ENCODE measurements at regions of chr20 and their contacts with region 1.

Region 1: GRCh38 chr20:23340524-23340923 is 10.1 kb upstream of the NXT1 start:
- DNase-seq: peak; percentile 84 to 86
- H3K4me3 ChIP-seq: no peak overlapping the region
- H3K4me3 Mint-ChIP-seq: no peak overlapping the region
- H3K27ac Mint-ChIP-seq: no peak overlapping the region
- H3K4me1 ChIP-seq: peaks cover 8% of the 10 kb centered on the region; the same call in 1 of the 2 replicates
- H3K4me1 Mint-ChIP-seq: peaks cover 12% of the 10 kb centered on the region
- H3K27me3 ChIP-seq: no peaks in the 10 kb centered on the region
- H3K27me3 Mint-ChIP-seq: no peaks in the 10 kb centered on the region
- CTCF ChIP-seq: peak; percentile 82 to 87

Region 2: GRCh38 chr20:22339091-22339881 is 1001.2 kb before region 1 on chr20:
- CTCF ChIA-PET with region 1: interaction called, 4 read pairs
- POLR2A ChIA-PET with region 1: no interaction called
- intact Hi-C with region 1: loop called (anchors 1 kb)
- DNase-seq: peak; percentile 67 to 82
- H3K4me3 ChIP-seq: no peak overlapping the region
- H3K4me3 Mint-ChIP-seq: peak overlapping the region; percentile 46
- H3K27ac Mint-ChIP-seq: peak overlapping the region; percentile 32
- H3K4me1 ChIP-seq: no peaks in the 10 kb centered on the region
- H3K4me1 Mint-ChIP-seq: peaks cover 12% of the 10 kb centered on the region
- H3K27me3 ChIP-seq: no peaks in the 10 kb centered on the region
- H3K27me3 Mint-ChIP-seq: no peaks in the 10 kb centered on the region
- CTCF ChIP-seq: peak; percentile 80 to 83

Region 3: GRCh38 chr20:22805219-22805618 is 535.3 kb before region 1 on chr20:
- CTCF ChIA-PET with region 1: interaction called, 4 read pairs
- POLR2A ChIA-PET with region 1: no interaction called
- intact Hi-C with region 1: loop called (anchors 1 kb)
- DNase-seq: peak in 1 of 2 experiments; percentile 29
- H3K4me3 ChIP-seq: no peak overlapping the region
- H3K4me3 Mint-ChIP-seq: no peak overlapping the region
- H3K27ac Mint-ChIP-seq: no peak overlapping the region
- H3K4me1 ChIP-seq: peaks cover 38% of the 10 kb centered on the region
- H3K4me1 Mint-ChIP-seq: peaks cover 36% of the 10 kb centered on the region
- H3K27me3 ChIP-seq: no peaks in the 10 kb centered on the region
- H3K27me3 Mint-ChIP-seq: no peaks in the 10 kb centered on the region
- CTCF ChIP-seq: no peak

Region 4: GRCh38 chr20:22962557-22963438 is 377.7 kb before region 1 on chr20:
- CTCF ChIA-PET with region 1: interaction called, 5 read pairs
- POLR2A ChIA-PET with region 1: no interaction called
- intact Hi-C with region 1: loop called (anchors 2 kb)
- DNase-seq: peak in 1 of 2 experiments; percentile 42
- H3K4me3 ChIP-seq: no peak overlapping the region
- H3K4me3 Mint-ChIP-seq: peak overlapping the region; percentile 20
- H3K27ac Mint-ChIP-seq: peak overlapping the region; percentile 82
- H3K4me1 ChIP-seq: peaks cover 33% of the 10 kb centered on the region
- H3K4me1 Mint-ChIP-seq: peaks cover 17% of the 10 kb centered on the region
- H3K27me3 ChIP-seq: no peaks in the 10 kb centered on the region
- H3K27me3 Mint-ChIP-seq: no peaks in the 10 kb centered on the region
- CTCF ChIP-seq: peak in 1 of 2 experiments; percentile 6

Region 5: GRCh38 chr20:23021951-23022350 is 318.6 kb before region 1 on chr20:
- CTCF ChIA-PET with region 1: interaction called, 5 read pairs
- POLR2A ChIA-PET with region 1: no interaction called
- intact Hi-C with region 1: loop called (anchors 1 kb)
- DNase-seq: no peak
- H3K4me3 ChIP-seq: no peak overlapping the region
- H3K4me3 Mint-ChIP-seq: no peak overlapping the region
- H3K27ac Mint-ChIP-seq: peak overlapping the region; percentile 84
- H3K4me1 ChIP-seq: peaks cover 73% of the 10 kb centered on the region
- H3K4me1 Mint-ChIP-seq: peaks cover 54% of the 10 kb centered on the region
- H3K27me3 ChIP-seq: no peaks in the 10 kb centered on the region
- H3K27me3 Mint-ChIP-seq: no peaks in the 10 kb centered on the region
- CTCF ChIP-seq: no peak

Region 6: GRCh38 chr20:23050847-23051631 is 289.5 kb before region 1 on chr20:
- CTCF ChIA-PET with region 1: interaction called, 13 read pairs
- POLR2A ChIA-PET with region 1: interaction called, 3 read pairs
- intact Hi-C with region 1: loop called (anchors 1 kb)
- DNase-seq: peak; percentile 78 to 82
- H3K4me3 ChIP-seq: peak overlapping the region; percentile 45
- H3K4me3 Mint-ChIP-seq: peak overlapping the region; percentile 85
- H3K27ac Mint-ChIP-seq: peak overlapping the region; percentile 97
- H3K4me1 ChIP-seq: peaks cover 30% of the 10 kb centered on the region
- H3K4me1 Mint-ChIP-seq: peaks cover 32% of the 10 kb centered on the region
- H3K27me3 ChIP-seq: no peaks in the 10 kb centered on the region
- H3K27me3 Mint-ChIP-seq: no peaks in the 10 kb centered on the region
- CTCF ChIP-seq: peak; percentile 46 to 65

Region 7: DNA sequence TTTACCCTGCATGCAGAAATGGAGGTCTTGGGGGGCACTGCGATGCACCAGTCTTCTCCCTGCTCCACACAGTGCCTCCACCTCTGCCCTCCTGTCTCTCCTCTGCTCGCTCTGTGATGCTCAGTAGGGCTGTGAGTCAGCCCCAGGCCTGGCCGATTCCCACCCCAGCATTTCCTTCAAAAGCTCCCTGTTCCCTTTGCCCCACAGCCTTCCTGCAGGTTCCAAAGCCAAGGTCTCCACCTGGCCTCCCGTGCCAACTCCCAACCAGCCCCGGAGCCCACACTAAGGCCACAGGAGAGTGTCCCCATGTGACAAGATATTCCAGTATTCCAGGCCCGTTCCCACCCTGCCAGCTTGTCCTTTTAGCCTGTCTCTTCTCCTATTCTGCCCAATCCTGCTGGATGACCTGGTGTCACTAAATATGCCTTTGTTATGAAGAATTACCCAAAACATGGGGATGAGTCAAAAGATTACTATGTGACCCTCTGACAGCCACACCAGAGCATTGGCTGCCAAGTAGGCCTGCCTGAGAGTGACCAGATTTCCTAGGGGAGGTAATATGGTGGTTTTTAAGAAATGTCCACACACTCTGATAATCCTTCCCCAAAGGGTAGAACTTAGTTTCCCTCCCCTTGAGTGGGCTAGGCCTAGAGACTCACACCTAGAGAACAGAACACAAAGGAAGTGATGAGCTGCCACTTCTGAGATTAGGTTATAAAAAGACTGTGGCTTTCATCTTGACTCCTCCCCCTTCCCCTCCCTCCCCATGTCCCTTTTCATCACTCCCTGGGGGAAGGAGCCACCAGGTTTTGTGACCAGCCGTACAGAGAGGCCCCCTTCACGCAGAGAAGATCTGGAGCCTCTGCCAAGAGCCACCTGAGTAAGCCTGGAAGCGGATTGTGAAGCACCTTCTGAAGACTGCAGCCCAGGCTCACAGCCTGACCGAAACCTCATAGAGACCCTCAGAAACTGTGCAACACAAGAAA is 108.6 kb before region 1 on chr20:
- CTCF ChIA-PET with region 1: interaction called, 38 read pairs
- POLR2A ChIA-PET with region 1: no interaction called
- intact Hi-C with region 1: loop called (anchors 1 kb)
- DNase-seq: peak; percentile 62 to 81
- H3K4me3 ChIP-seq: no peak overlapping the region
- H3K4me3 Mint-ChIP-seq: peak overlapping the region; percentile 37
- H3K27ac Mint-ChIP-seq: peak overlapping the region; percentile 92
- H3K4me1 ChIP-seq: peaks cover 57% of the 10 kb centered on the region
- H3K4me1 Mint-ChIP-seq: peaks cover 52% of the 10 kb centered on the region
- H3K27me3 ChIP-seq: no peaks in the 10 kb centered on the region
- H3K27me3 Mint-ChIP-seq: no peaks in the 10 kb centered on the region
- CTCF ChIP-seq: no peak